PC-3 (cell line): ENCODE measurements at regions of chr6 and their contacts with region 1.

Region 1: GRCh38 chr6:57190140-57190539 is 18.0 kb downstream of the BAG2 start:
- DNase-seq: peak; percentile 45
- ATAC-seq: peak; percentile 70
- H3K4me3 ChIP-seq: no peak overlapping the region
- H3K27ac ChIP-seq: no peak overlapping the region
- H3K4me1 ChIP-seq: no peaks in the 10 kb centered on the region
- H3K27me3 ChIP-seq: no peaks in the 10 kb centered on the region
- CTCF ChIP-seq: peak; percentile 64

Region 2: DNA sequence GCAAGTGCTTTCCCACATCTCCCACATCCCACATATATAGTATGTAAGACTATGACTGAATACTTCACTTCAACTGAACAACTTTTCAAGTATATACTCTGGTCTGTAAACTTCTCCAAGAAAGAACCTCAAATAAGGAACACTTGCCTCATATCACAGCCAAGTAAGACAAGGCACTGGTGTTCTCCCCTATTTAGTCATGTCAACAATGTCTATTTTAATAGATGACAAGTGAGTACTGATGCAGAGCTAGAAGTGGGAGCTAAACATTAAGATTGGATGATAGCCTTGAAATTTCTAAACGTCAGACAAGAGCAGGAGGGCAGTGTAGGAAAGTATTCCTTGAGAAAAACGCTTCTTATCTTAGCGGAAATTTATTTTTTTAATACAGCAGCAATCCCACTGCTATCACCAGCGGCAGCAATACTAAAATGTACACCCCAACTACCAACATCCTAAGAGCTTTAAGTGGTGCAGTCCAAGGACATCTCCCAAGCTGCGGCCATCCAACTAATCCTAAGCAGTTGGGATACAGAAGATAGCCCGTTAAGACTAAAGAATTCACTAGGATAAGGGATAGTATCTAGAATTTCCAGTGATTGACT is 576.8 kb before region 1 on chr6:
- CTCF ChIA-PET with region 1: no interaction called
- POLR2A ChIA-PET with region 1: no interaction called
- intact Hi-C with region 1: no loop called
- DNase-seq: no peak
- ATAC-seq: no peak
- H3K4me3 ChIP-seq: no peak overlapping the region
- H3K27ac ChIP-seq: no peak overlapping the region
- H3K4me1 ChIP-seq: no peaks in the 10 kb centered on the region
- H3K27me3 ChIP-seq: no peaks in the 10 kb centered on the region
- CTCF ChIP-seq: no peak

Region 3: DNA sequence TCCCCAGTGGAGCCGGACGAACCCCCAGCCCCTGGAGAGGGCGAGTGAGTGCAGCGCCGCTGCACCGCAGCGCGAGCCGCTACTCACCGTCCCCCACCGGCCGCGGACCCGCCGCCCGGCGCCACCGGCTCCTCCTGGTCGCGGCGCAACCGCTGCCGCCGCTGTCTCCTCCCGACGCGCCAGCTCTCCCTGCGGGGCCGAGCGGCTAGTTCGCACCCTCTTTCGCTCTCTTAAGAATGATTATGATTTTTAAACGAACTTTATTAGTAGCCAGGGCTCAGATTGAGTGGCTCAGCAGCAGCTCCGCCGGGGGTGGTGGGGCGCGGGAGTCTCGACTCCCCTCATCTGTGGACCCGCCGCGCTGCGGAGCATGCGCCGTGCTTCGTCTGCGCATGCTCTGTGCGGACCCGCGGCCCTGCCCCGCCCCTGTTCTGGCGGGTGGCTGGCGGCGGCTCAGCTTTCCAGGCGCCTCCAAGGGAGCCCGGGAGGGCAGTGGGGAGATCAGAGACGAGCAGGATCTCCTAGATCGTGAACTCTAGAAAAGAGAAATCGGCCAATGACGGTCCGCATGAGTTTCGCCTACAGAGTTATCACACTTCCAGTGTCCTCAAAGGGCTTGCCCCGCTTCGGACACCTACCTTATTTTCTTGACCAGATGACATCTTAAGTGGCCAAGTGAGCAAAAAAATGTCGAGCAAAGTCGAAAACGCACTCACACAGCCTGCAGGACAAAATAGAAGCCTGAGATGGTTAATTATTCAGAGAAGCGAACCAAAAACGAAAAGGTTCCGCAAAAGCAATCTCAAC is 32.0 kb after region 1 on chr6 and contains the start of gene RAB23:
- CTCF ChIA-PET with region 1: no interaction called
- POLR2A ChIA-PET with region 1: no interaction called
- intact Hi-C with region 1: loop called (anchors 2 kb)
- DNase-seq: peak; percentile 90
- ATAC-seq: peak; percentile 78
- H3K4me3 ChIP-seq: peak within 1 kb of the TSS; percentile 92
- H3K27ac ChIP-seq: peak within 1 kb of the TSS; percentile 29; the same call in 1 of the 2 replicates
- H3K4me1 ChIP-seq: peaks cover 7% of the 10 kb centered on the region
- H3K27me3 ChIP-seq: no peaks in the 10 kb centered on the region
- CTCF ChIP-seq: peak; percentile 0; the same call in 1 of the 2 replicates
- total RNA-seq, gene RAB23: 8.2 and 11.2 TPM in 2 replicates